ENCODE measurements at regions of chr6 and their contacts with region 1.

Region 1: GRCh38 chr6:89080542-89081422 is at the start of gene PNRC1:
- DNase-seq: peak; percentile 99
- H3K4me3 Mint-ChIP-seq: peak within 1 kb of the TSS; percentile 95
- H3K27ac Mint-ChIP-seq: peak within 1 kb of the TSS; percentile 98
- H3K4me1 Mint-ChIP-seq: peaks cover 39% of the 10 kb centered on the region
- H3K27me3 Mint-ChIP-seq: no peaks in the 10 kb centered on the region
- total RNA-seq, gene PNRC1: 45.6 and 47.6 TPM in 2 replicates

Region 2: DNA sequence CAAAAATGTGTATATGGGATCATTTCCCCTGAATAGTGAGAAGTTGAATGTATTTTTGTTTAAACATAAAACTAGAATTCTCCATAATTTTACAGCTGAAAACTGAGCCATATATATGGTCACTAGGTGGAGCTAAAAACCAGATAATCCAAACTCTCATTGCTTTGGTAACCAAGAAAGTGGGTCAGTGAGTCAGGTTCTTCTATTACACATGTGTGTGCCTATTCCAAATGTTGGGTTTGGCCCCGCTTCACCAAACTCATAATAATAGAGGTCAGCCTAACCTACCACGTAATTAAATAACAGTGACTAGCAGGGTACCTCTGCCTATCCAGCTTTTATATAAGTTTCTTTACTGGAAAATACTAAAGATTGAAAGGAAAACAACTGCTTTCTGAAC is 98.1 kb before region 1 on chr6:
- intact Hi-C with region 1: loop called (anchors 1 kb)
- DNase-seq: no peak
- H3K4me3 Mint-ChIP-seq: no peak overlapping the region
- H3K27ac Mint-ChIP-seq: no peak overlapping the region
- H3K4me1 Mint-ChIP-seq: no peaks in the 10 kb centered on the region
- H3K27me3 Mint-ChIP-seq: peaks cover 4% of the 10 kb centered on the region

Region 3: GRCh38 chr6:89145787-89146646 is 65.2 kb after region 1 on chr6 and contains the start of gene PM20D2:
- intact Hi-C with region 1: loop called (anchors 1 kb)
- DNase-seq: peak; percentile 59
- H3K4me3 Mint-ChIP-seq: peak within 1 kb of the TSS; percentile 93
- H3K27ac Mint-ChIP-seq: peak within 1 kb of the TSS; percentile 98
- H3K4me1 Mint-ChIP-seq: peaks cover 40% of the 10 kb centered on the region
- H3K27me3 Mint-ChIP-seq: peaks cover 11% of the 10 kb centered on the region
- total RNA-seq, gene PM20D2: 14.1 TPM in 2 replicates

Region 4: GRCh38 chr6:89360415-89360999 is 279.7 kb after region 1 on chr6:
- intact Hi-C with region 1: loop called (anchors 2 kb)
- DNase-seq: no peak
- H3K4me3 Mint-ChIP-seq: peak overlapping the region; percentile 16
- H3K27ac Mint-ChIP-seq: peak overlapping the region; percentile 74
- H3K4me1 Mint-ChIP-seq: peaks cover 73% of the 10 kb centered on the region
- H3K27me3 Mint-ChIP-seq: no peaks in the 10 kb centered on the region

Region 5: DNA sequence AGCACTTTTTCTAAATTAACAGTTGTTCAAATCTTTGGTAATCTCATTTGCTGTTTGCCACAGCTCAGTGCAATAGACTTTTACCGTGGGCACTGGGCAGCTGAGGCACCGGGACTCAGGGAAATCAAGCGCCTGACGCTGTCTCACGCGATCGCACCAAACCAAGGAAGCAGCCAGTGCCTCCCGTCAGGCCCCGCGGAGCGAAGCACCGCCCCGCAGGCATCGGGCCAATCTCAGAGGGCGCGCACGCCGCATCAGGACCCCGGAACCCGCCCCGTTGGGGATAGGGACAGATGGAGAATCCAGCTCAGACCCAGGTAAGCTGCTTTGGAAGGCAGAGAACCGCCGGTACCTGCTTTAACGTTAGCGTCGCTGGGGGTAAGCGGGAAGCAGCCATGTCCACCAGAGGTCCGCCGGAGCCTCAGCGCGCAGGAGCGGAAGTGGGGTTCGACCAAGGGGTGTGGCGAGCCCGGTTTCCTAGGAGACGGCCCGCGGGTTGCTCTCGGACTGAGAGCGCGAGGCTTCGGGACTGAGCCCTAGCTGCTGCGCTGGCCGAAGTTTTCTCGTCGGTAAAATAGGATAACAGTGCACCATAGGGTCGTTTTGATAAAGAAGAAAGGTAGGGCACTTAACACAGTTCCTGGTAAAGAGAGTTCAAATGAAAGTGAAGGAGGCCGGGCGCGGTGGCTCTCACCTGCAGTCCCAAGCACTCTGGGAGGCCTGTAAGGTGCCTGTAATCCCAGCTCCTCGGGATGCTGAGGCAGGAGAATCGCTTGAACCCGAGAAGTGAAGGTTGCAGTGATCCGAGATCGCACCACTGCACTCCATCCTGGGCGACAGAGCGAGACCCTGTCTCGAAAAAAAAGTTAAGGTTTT is 557.8 kb after region 1 on chr6 and contains the start of gene LYRM2:
- intact Hi-C with region 1: loop called (anchors 1 kb)
- DNase-seq: peak; percentile 89
- H3K4me3 Mint-ChIP-seq: peak within 1 kb of the TSS; percentile 94
- H3K27ac Mint-ChIP-seq: peak within 1 kb of the TSS; percentile 96
- H3K4me1 Mint-ChIP-seq: peaks cover 29% of the 10 kb centered on the region
- H3K27me3 Mint-ChIP-seq: no peaks in the 10 kb centered on the region
- total RNA-seq, gene LYRM2: 32.8 and 34.7 TPM in 2 replicates

Measured in activated T-helper 1 cell treated with anti-CD3 and anti-CD28 coated beads, Interleukin-12 subunit alpha, Interleukin-12 subunit beta, Interleukin-2, Interleukin-4 antibody, amounts not matched to agents 30 ng/mL and 10 ng/mL and 1 ng/mL, durations not matched to agents 14 hours and 24 hours and 36 hours (primary cell).